ENCODE measurements at regions of chr2 and their contacts with region 1.

Region 1: GRCh38 chr2:140863713-140864112 is 1267.1 kb downstream of the LRP1B start:
- DNase-seq: no peak
- H3K4me3 ChIP-seq: no peak overlapping the region
- H3K27ac ChIP-seq: no peak overlapping the region
- H3K4me1 ChIP-seq: no peaks in the 10 kb centered on the region
- H3K27me3 ChIP-seq: no peaks in the 10 kb centered on the region
- CTCF ChIP-seq: peak in 1 of 3 experiments; percentile 34

Region 2: DNA sequence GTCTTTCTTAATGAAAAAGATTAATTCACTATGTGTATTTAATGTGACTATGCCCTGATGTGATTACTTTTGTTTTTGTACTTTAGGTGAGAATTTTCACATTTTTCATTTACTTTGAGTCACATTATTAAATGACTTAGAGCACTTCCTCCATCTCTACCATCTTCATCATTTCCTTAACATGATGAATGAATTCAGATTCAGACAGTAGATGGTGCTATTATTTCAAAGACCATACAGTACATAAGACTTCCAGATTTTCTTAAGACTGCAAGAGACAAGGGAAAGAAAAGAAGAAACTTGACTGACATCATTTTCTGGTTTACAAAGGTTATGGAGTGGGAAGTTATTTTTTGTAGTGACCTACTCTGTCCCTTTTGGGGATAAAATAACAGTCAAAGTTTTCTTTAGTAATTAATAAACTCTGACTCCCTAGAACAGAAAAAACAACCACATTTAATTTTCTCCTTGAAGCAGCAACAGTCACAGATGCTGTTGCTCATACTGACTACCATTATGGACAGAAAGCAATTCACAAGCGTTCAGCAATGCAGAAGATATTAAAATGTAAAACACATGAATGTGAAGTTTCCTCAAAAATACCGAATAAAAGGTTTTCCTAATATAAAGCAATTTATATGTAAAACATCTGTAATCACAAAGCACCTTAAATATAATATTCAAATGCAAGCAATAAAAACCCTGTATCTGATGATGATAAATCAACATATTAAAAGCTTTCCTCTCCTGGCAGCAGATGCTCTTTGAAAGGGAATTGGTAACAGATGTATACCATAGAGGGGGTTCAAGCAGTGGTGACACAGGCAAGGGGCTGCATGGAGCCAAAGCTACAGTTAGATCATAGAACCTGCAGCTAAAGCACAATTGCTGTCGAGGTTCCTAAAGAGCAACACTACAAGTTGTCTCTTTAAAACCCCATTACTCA is 1072.6 kb before region 1 on chr2:
- intact Hi-C with region 1: loop called (anchors 5 kb)
- DNase-seq: no peak
- H3K4me3 ChIP-seq: no peak overlapping the region
- H3K27ac ChIP-seq: no peak overlapping the region
- H3K4me1 ChIP-seq: no peaks in the 10 kb centered on the region
- H3K27me3 ChIP-seq: no peaks in the 10 kb centered on the region
- CTCF ChIP-seq: peak in 1 of 3 experiments; percentile 15

Region 3: DNA sequence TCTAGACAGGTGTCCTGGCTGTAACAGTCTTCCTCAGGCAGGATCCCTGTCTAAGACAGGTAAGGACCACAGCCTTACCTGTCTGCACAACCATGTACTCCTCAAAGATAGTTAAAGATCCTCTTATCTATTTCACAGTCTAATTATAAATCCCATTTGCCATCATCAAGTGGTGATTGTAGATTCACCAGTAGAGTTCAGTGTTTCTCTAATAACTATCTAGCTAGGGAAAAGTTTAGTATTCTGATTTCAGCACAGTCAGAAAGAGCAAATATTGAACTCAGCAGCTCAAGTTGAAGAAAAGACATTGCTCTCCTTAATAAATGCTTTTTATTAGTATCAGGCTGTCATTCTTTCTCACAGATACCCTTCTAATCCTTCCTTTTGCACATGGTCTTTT is 778.0 kb before region 1 on chr2:
- intact Hi-C with region 1: loop called (anchors 5 kb)
- DNase-seq: no peak
- H3K4me3 ChIP-seq: no peak overlapping the region
- H3K27ac ChIP-seq: no peak overlapping the region
- H3K4me1 ChIP-seq: no peaks in the 10 kb centered on the region
- H3K27me3 ChIP-seq: no peaks in the 10 kb centered on the region
- CTCF ChIP-seq: no peak

Region 4: GRCh38 chr2:141242008-141242407 is 378.3 kb after region 1 on chr2:
- intact Hi-C with region 1: no loop called
- DNase-seq: no peak
- H3K4me3 ChIP-seq: no peak overlapping the region
- H3K27ac ChIP-seq: no peak overlapping the region
- H3K4me1 ChIP-seq: no peaks in the 10 kb centered on the region
- H3K27me3 ChIP-seq: no peaks in the 10 kb centered on the region
- CTCF ChIP-seq: no peak